HCT116 (cell line): ENCODE measurements at regions of chr19 and their contacts with region 1.

Region 1: DNA sequence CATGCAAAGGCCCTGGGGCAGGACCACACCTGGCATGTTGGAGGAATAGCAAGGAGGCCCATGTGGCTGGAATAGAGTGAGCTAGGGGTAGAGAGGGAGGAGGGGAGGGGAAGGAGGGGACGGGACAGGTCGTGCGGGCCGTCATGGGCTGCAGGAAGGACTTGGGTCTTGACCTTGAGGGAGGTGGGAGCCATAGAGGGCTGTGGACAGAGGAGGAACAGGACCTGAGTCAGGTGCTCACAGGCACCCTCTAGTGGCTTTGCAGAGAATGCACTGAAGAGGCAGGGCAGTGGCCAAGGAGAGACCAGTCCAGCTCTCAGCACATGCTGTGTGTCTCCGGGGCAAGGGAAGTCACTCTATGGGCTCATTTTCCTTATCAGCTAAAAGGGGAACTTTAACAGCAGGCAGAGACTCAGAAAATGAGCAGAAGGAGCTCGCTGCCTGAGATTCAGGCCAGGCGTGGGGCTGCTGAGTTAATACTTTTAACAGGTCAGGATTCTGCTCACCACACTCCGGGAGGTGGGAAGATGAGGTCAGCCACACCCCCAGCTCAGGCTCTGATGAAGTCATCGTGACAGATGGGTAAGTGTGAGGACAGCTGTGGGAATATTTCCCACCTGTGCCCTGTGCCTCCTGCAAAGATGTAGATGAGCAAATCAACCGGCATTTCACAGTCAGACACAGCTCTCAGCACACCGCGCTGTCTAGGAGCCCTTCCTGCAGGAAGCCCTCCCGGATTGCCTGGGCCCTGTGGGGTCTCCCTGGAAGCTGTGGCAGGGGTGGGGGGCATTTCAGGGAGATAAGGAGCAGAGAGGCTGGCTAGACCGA is 6.0 kb upstream of the TNFAIP8L1 start:
- DNase-seq: peak; percentile 65
- ATAC-seq: peak; percentile 81
- H3K4me3 ChIP-seq: no peak overlapping the region
- H3K27ac ChIP-seq: no peak overlapping the region; the same call in 1 of the 2 replicates
- H3K4me1 ChIP-seq: peaks cover 18 to 40% of the 10 kb centered on the region in 2 experiments
- H3K27me3 ChIP-seq: no peaks in the 10 kb centered on the region
- CTCF ChIP-seq: peak; percentile 65 to 96 (median 90); a peak in 5 of 6 replicates
- POLR2A ChIP-seq: no peak
- RAD21 ChIP-seq: peak; percentile 49

Region 2: GRCh38 chr19:4567584-4568071 is 65.7 kb before region 1 on chr19:
- CTCF ChIA-PET with region 1: interaction called, 29 read pairs
- POLR2A ChIA-PET with region 1: interaction called, 4 read pairs
- RAD21 ChIA-PET with region 1: interaction called in 1 of 2 experiments, 4 read pairs
- intact Hi-C with region 1: no loop called
- DNase-seq: no peak
- ATAC-seq: peak; percentile 82
- H3K4me3 ChIP-seq: no peak overlapping the region
- H3K27ac ChIP-seq: peak overlapping the region; percentile 6; the same call in 1 of the 2 replicates
- H3K4me1 ChIP-seq: peaks cover 17 to 39% of the 10 kb centered on the region in 2 experiments
- H3K27me3 ChIP-seq: no peaks in the 10 kb centered on the region
- CTCF ChIP-seq: peak; percentile 57 to 97 (median 95)
- POLR2A ChIP-seq: no peak
- RAD21 ChIP-seq: no peak; the same call in none of the 2 replicates

Region 3: DNA sequence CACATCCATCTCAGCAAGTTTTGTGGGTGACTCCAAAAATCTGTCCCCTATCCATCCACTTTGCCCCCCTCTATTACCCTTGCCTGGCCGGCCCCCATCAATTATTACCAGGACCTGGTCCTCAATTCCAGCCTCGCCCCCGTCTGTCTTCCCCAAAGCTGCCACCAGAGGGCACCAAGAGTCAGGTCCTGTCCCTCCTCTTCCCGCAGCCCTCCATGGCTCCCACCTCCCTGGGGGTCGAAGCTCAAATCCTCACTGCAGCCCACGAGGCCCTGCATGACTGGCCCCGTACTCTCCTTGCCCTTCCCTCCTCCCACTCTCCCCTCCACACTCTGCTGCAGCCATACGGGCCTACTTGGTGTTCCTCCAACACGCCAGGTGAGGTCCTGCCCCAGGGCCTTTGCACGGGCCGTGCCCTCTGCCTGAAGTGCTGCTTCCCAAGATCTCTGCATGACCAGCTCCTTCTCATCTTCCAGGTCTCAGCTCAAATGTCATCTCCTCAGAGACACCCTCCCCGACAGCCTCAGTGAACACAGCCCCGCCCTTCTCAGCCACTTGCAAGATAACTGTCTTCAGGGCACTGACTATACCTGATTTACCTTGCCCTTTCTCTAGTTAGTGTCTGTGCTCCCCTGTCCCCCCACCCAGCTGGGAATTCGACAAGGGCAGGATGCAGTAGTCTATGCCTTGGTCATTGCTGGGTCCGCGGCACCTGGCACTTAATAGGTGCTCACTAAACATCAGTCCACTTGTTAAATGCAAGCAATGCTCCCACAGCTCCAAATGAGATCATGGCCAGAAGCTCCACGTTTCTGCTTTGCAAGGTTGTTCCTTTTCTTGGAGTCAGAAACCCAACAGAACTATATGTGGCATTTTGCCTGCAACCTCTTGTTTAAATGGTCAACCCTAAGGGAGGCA is 57.1 kb before region 1 on chr19:
- CTCF ChIA-PET with region 1: interaction called, 21 read pairs
- POLR2A ChIA-PET with region 1: interaction called, 4 read pairs
- RAD21 ChIA-PET with region 1: interaction called in 1 of 2 experiments, 3 read pairs
- intact Hi-C with region 1: loop called (anchors 5 kb)
- DNase-seq: no peak
- ATAC-seq: peak; percentile 50
- H3K4me3 ChIP-seq: peak overlapping the region in 1 of 2 experiments; percentile 55; a peak in 2 of 4 replicates
- H3K27ac ChIP-seq: peak overlapping the region; percentile 81
- H3K4me1 ChIP-seq: peaks cover 50 to 62% of the 10 kb centered on the region in 2 experiments
- H3K27me3 ChIP-seq: no peaks in the 10 kb centered on the region
- CTCF ChIP-seq: peak; percentile 62 to 95 (median 87); a peak in 5 of 6 replicates
- POLR2A ChIP-seq: no peak
- RAD21 ChIP-seq: no peak

Region 4: GRCh38 chr19:4589579-4590410 is 43.6 kb before region 1 on chr19:
- CTCF ChIA-PET with region 1: interaction called, 15 read pairs
- POLR2A ChIA-PET with region 1: no interaction called
- RAD21 ChIA-PET with region 1: no interaction called
- intact Hi-C with region 1: no loop called
- DNase-seq: no peak
- ATAC-seq: peak; percentile 90
- H3K4me3 ChIP-seq: no peak overlapping the region
- H3K27ac ChIP-seq: no peak overlapping the region
- H3K4me1 ChIP-seq: peaks cover 11 to 25% of the 10 kb centered on the region in 2 experiments; a peak in 3 of 4 replicates
- H3K27me3 ChIP-seq: no peaks in the 10 kb centered on the region
- CTCF ChIP-seq: peak; percentile 57 to 74 (median 64); a peak in 5 of 6 replicates
- POLR2A ChIP-seq: no peak
- RAD21 ChIP-seq: no peak

Region 5: DNA sequence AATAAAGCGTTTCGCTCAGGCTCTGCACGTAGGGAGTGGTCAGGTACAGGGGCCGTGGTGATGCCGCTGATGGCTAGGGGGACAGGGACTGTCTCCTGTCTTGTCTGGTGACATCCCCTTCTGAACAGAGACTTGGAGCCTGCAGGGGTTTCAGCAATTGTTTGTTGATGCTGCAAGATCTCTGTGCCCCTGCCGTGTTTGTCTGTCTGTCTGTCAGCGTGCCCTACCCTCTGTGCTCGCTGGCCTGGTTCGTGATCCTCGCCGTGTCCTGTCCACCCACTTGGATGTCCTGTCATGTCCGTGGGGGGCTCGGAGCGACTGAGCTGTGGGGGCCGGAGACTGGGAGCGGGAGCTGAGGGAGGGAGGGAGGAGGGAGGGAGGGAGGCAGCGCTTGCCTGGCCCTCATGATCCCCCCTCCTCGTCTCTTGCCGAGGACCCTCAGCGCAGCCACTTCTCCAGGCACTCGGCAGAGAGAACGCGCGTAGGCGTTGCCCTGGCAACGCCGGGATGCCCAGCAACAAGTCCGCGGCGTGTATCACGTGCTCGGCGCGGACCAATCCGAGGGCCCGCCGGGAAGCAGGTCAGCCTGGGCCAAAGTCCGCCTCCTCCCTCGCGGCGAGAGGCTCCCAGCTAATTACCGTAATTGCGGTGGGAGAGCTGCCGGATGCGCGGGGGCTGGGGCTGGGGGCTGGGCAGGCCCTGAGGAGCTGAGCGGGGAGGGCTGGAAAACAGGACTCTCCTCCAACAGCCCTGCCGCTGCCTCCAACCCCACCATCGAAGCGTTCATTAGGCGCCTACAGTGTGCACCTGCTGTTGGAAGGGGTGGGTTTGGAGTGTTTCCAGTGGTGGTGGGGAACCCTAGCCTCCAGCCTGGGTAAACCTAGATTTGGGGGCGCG is 126.3 kb after region 1 on chr19:
- CTCF ChIA-PET with region 1: no interaction called
- POLR2A ChIA-PET with region 1: no interaction called
- RAD21 ChIA-PET with region 1: no interaction called
- intact Hi-C with region 1: no loop called
- DNase-seq: peak; percentile 78
- ATAC-seq: peak; percentile 99
- H3K4me3 ChIP-seq: peak overlapping the region; percentile 38 to 54
- H3K27ac ChIP-seq: no peak overlapping the region
- H3K4me1 ChIP-seq: peaks cover 5 to 14% of the 10 kb centered on the region in 2 experiments
- H3K27me3 ChIP-seq: no peaks in the 10 kb centered on the region
- CTCF ChIP-seq: no peak
- POLR2A ChIP-seq: no peak
- RAD21 ChIP-seq: no peak